Activated naive CD4-positive, alpha-beta T cell treated with anti-CD3 and anti-CD28 coated beads, Interleukin-2, amount 10 ng/mL, durations not matched to agents 7 days and 5 days (primary cell): ENCODE measurements at regions of chr4 and their contacts with region 1.

Region 1: GRCh38 chr4:185183619-185184281 is 20.1 kb downstream of the CFAP97 start:
- DNase-seq: peak; percentile 84
- H3K4me3 Mint-ChIP-seq: no peak overlapping the region
- H3K27ac Mint-ChIP-seq: no peak overlapping the region
- H3K4me1 Mint-ChIP-seq: peaks cover 7% of the 10 kb centered on the region
- H3K27me3 Mint-ChIP-seq: no peaks in the 10 kb centered on the region

Region 2: GRCh38 chr4:185171373-185172071 is 12.2 kb before region 1 on chr4:
- CTCF ChIA-PET with region 1: interaction called, 13 read pairs
- DNase-seq: no peak
- H3K4me3 Mint-ChIP-seq: no peak overlapping the region
- H3K27ac Mint-ChIP-seq: no peak overlapping the region
- H3K4me1 Mint-ChIP-seq: no peaks in the 10 kb centered on the region
- H3K27me3 Mint-ChIP-seq: no peaks in the 10 kb centered on the region

Region 3: DNA sequence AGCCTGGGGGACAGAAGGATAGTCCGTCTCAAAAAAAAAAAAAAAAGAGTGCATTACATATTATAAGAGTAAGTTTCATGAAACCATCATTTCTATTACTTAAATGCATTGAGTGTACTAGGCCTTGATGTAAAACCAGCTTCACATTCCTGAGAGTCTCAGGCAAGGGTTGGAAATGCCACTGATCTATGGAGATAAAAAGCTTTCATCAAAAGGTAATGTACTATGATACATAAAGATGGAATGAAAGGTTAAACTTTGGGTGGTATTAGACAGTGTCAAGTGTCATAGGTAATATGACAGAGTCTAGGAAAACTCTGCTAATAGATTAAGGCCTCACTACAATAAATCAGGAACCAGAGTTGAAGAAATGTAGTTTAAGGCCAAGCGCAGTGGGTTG is 12.7 kb after region 1 on chr4:
- CTCF ChIA-PET with region 1: interaction called, 16 read pairs
- DNase-seq: no peak
- H3K4me3 Mint-ChIP-seq: no peak overlapping the region
- H3K27ac Mint-ChIP-seq: no peak overlapping the region
- H3K4me1 Mint-ChIP-seq: peaks cover 18% of the 10 kb centered on the region
- H3K27me3 Mint-ChIP-seq: no peaks in the 10 kb centered on the region

Region 4: GRCh38 chr4:185318679-185319078 is 134.9 kb after region 1 on chr4:
- CTCF ChIA-PET with region 1: no interaction called
- DNase-seq: no peak
- H3K4me3 Mint-ChIP-seq: no peak overlapping the region
- H3K27ac Mint-ChIP-seq: peak overlapping the region; percentile 65
- H3K4me1 Mint-ChIP-seq: peaks cover 15% of the 10 kb centered on the region
- H3K27me3 Mint-ChIP-seq: no peaks in the 10 kb centered on the region